MCF 10A (cell line): ENCODE measurements at regions of chr17 and their contacts with region 1.

Region 1: GRCh38 chr17:43760254-43760852 is 1.8 kb upstream of the SOST start:
- DNase-seq: peak; percentile 95
- H3K4me3 Mint-ChIP-seq: no peak overlapping the region
- H3K27ac Mint-ChIP-seq: no peak overlapping the region
- H3K4me1 Mint-ChIP-seq: peaks cover 12% of the 10 kb centered on the region
- H3K27me3 Mint-ChIP-seq: no peaks in the 10 kb centered on the region
- CTCF ChIP-seq: peak; percentile 98

Region 2: DNA sequence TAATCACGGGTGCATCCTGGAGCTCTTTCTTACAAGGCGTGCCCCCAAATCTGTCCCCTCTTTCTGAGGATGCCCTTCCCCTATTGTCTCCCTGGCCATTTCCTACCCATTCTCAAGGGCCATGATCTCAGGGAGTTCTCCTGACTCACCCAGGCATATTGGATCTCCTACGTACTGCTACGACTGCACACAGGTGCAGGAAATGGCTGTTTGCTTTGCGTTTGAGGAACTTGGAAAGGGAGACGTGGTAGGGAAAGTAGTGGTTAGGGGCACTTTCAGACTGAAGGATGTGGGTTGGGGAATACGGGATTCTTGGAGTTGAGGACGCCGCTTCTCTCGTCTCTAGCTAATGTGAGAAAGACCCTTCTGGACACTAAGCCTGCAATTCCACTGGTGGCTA is 79.9 kb before region 1 on chr17:
- CTCF ChIA-PET with region 1: interaction called, 10 read pairs
- POLR2A ChIA-PET with region 1: no interaction called
- intact Hi-C with region 1: no loop called
- DNase-seq: no peak
- H3K4me3 Mint-ChIP-seq: no peak overlapping the region
- H3K27ac Mint-ChIP-seq: no peak overlapping the region
- H3K4me1 Mint-ChIP-seq: peaks cover 4% of the 10 kb centered on the region
- H3K27me3 Mint-ChIP-seq: no peaks in the 10 kb centered on the region
- CTCF ChIP-seq: no peak

Region 3: GRCh38 chr17:43772877-43773648 is 12.7 kb after region 1 on chr17:
- CTCF ChIA-PET with region 1: interaction called, 31 read pairs
- POLR2A ChIA-PET with region 1: interaction called, 4 read pairs
- intact Hi-C with region 1: no loop called
- DNase-seq: no peak
- H3K4me3 Mint-ChIP-seq: no peak overlapping the region
- H3K27ac Mint-ChIP-seq: no peak overlapping the region
- H3K4me1 Mint-ChIP-seq: no peaks in the 10 kb centered on the region
- H3K27me3 Mint-ChIP-seq: no peaks in the 10 kb centered on the region
- CTCF ChIP-seq: no peak

Region 4: GRCh38 chr17:44044067-44044466 is 283.7 kb after region 1 on chr17:
- CTCF ChIA-PET with region 1: no interaction called
- POLR2A ChIA-PET with region 1: no interaction called
- intact Hi-C with region 1: no loop called
- DNase-seq: peak; percentile 79
- H3K4me3 Mint-ChIP-seq: no peak overlapping the region
- H3K27ac Mint-ChIP-seq: no peak overlapping the region
- H3K4me1 Mint-ChIP-seq: peaks cover 24% of the 10 kb centered on the region
- H3K27me3 Mint-ChIP-seq: no peaks in the 10 kb centered on the region
- CTCF ChIP-seq: no peak